Left ventricle myocardium inferior (tissue), 1 donor: ENCODE measurements at regions of chr2 and their contacts with region 1.

Region 1: DNA sequence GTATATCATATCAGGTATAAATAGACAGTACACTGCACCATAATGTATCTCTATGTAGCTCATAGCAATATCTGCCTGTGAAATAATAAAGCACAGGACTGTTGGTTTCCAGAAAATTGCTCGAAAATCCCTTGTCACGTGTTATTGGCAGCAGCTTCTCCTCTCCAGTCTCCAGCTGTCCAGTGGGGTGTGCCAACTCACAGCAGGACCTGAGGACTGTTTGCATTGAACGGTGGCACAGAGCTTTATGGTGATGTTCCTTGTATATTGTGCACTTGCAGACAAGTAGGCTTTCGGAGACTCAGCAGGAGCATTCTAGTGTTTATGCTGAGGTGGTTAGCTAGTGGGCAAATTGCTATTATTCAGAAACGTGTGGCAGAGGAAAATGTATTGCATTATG is 182.2 kb upstream of the ATP5MC3 start:
- DNase-seq: no peak
- H3K4me3 ChIP-seq: no peak overlapping the region
- H3K27ac ChIP-seq: no peak overlapping the region
- H3K4me1 ChIP-seq: no peaks in the 10 kb centered on the region
- H3K27me3 ChIP-seq: peaks cover 91% of the 10 kb centered on the region
- CTCF ChIP-seq: no peak

Region 2: DNA sequence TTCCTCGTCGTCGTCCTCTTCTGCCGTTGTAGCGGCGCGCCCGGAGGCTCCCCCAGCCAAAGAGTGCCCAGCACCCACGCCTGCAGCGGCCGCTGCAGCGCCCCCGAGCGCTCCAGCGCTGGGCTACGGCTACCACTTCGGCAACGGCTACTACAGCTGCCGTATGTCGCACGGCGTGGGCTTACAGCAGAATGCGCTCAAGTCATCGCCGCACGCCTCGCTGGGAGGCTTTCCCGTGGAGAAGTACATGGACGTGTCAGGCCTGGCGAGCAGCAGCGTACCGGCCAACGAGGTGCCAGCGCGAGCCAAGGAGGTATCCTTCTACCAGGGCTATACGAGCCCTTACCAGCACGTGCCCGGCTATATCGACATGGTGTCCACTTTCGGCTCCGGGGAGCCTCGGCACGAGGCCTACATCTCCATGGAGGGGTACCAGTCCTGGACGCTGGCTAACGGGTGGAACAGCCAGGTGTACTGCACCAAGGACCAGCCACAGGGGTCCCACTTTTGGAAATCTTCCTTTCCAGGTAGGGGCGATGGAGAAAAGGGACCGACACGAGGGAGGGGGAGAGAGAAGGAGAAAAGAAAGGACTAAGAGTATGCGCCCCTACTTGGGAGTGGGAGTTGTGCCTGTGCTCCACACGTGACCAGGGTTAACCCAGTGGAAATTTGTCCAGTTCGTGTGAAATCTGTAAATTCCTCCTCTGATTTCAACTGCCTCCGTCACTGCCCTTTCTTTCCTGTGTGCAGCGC is 729.6 kb after region 1 on chr2:
- intact Hi-C with region 1: loop called (anchors 5 kb)
- DNase-seq: no peak
- H3K4me3 ChIP-seq: peak overlapping the region; percentile 53
- H3K27ac ChIP-seq: no peak overlapping the region
- H3K4me1 ChIP-seq: peaks cover 38% of the 10 kb centered on the region
- H3K27me3 ChIP-seq: peaks cover 100% of the 10 kb centered on the region
- CTCF ChIP-seq: no peak